Activated CD8-positive, alpha-beta T cell treated with anti-CD3 and anti-CD28 coated beads, Interleukin-2, amount 10 ng/mL, durations not matched to agents 7 days and 5 days (primary cell): ENCODE measurements at regions of chr10 and their contacts with region 1.

Region 1: GRCh38 chr10:99435986-99436638 is 5.7 kb upstream of the GOT1 start:
- DNase-seq: no peak
- ATAC-seq: peak; percentile 43
- H3K4me3 Mint-ChIP-seq: no peak overlapping the region
- H3K27ac Mint-ChIP-seq: no peak overlapping the region
- H3K4me1 Mint-ChIP-seq: peaks cover 20% of the 10 kb centered on the region
- H3K27me3 Mint-ChIP-seq: no peaks in the 10 kb centered on the region

Region 2: GRCh38 chr10:99394761-99395386 is 41.2 kb before region 1 on chr10:
- CTCF ChIA-PET with region 1: interaction called, 19 read pairs
- POLR2A ChIA-PET with region 1: no interaction called
- DNase-seq: no peak
- ATAC-seq: no peak
- H3K4me3 Mint-ChIP-seq: no peak overlapping the region
- H3K27ac Mint-ChIP-seq: no peak overlapping the region
- H3K4me1 Mint-ChIP-seq: peaks cover 12% of the 10 kb centered on the region
- H3K27me3 Mint-ChIP-seq: peaks cover 2% of the 10 kb centered on the region

Region 3: GRCh38 chr10:99422529-99423096 is 13.5 kb before region 1 on chr10:
- CTCF ChIA-PET with region 1: interaction called, 13 read pairs
- POLR2A ChIA-PET with region 1: no interaction called
- DNase-seq: no peak
- ATAC-seq: no peak
- H3K4me3 Mint-ChIP-seq: no peak overlapping the region
- H3K27ac Mint-ChIP-seq: no peak overlapping the region
- H3K4me1 Mint-ChIP-seq: no peaks in the 10 kb centered on the region
- H3K27me3 Mint-ChIP-seq: no peaks in the 10 kb centered on the region

Region 4: DNA sequence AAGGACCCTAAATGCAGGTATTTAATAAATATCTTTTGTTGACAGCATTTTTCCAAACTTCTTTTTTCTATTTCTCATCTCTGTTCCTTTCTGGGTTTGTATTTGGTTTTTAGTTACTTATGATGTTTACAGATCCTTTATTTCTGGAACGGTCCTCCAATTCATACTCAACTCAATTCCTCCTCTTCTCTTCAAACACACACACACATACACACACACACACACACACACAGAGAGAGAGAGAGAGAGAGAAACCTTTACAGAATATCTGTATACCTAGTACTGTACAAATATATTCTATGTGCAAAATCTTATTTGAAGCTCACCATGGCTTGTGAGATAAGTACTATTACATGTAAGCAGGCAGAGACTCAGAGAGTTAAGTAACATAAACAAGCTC is 15.9 kb after region 1 on chr10:
- CTCF ChIA-PET with region 1: interaction called, 13 read pairs
- POLR2A ChIA-PET with region 1: no interaction called
- DNase-seq: no peak
- ATAC-seq: no peak
- H3K4me3 Mint-ChIP-seq: no peak overlapping the region
- H3K27ac Mint-ChIP-seq: no peak overlapping the region
- H3K4me1 Mint-ChIP-seq: no peaks in the 10 kb centered on the region
- H3K27me3 Mint-ChIP-seq: peaks cover 52% of the 10 kb centered on the region

Region 5: DNA sequence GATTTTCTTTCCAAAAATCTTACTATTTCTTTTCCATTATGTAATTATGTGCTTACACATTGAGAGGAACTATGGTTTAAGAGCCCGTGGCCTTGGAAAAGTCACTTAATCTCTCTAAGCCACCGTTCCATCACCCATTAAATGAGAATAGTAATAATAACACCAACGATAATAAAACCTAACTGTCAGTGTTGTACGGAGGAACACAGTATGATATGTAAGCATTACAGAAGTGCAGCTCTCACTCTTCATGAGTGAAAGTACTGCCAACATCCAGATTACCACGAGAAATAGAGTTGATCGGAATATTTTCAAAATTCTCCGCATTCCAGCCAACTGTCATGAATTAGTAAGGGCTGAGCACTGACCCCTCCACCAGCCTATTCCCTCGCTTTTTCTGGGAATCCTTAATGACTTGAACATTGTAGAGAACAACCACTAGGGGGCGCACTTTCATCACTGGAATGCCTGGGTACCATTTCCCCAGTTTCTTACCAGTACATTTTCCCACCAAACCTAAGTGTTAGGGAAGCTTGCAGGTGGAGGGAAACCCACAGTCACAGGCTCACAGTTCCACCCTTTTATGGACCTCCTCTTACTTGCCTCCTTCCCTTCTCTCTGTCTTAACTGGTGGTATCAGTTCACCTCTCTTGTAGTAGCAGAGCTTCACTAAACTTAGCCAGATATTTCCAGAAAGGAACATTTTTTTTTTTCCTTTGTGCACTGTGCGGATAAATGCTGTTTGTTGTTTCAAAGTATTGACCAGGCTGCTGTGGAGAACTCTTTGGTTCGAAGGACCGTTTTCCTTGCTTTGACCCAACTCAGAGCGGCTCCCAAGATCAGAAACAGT is 124.4 kb after region 1 on chr10:
- CTCF ChIA-PET with region 1: interaction called, 13 read pairs
- POLR2A ChIA-PET with region 1: no interaction called
- DNase-seq: peak; percentile 66
- ATAC-seq: no peak
- H3K4me3 Mint-ChIP-seq: no peak overlapping the region
- H3K27ac Mint-ChIP-seq: no peak overlapping the region
- H3K4me1 Mint-ChIP-seq: peaks cover 9% of the 10 kb centered on the region
- H3K27me3 Mint-ChIP-seq: peaks cover 26% of the 10 kb centered on the region

Region 6: GRCh38 chr10:99620713-99621453 is 184.8 kb after region 1 on chr10:
- CTCF ChIA-PET with region 1: interaction called, 101 read pairs
- POLR2A ChIA-PET with region 1: interaction called, 8 read pairs
- DNase-seq: peak; percentile 96
- ATAC-seq: peak; percentile 94
- H3K4me3 Mint-ChIP-seq: peak overlapping the region; percentile 84
- H3K27ac Mint-ChIP-seq: peak overlapping the region; percentile 96
- H3K4me1 Mint-ChIP-seq: peaks cover 39% of the 10 kb centered on the region
- H3K27me3 Mint-ChIP-seq: peaks cover 4% of the 10 kb centered on the region

Region 7: GRCh38 chr10:99698504-99699080 is 262.5 kb after region 1 on chr10:
- CTCF ChIA-PET with region 1: no interaction called
- POLR2A ChIA-PET with region 1: no interaction called
- DNase-seq: no peak
- ATAC-seq: no peak
- H3K4me3 Mint-ChIP-seq: no peak overlapping the region
- H3K27ac Mint-ChIP-seq: no peak overlapping the region
- H3K4me1 Mint-ChIP-seq: no peaks in the 10 kb centered on the region
- H3K27me3 Mint-ChIP-seq: no peaks in the 10 kb centered on the region